Activated CD4-positive, alpha-beta T cell treated with anti-CD3 and anti-CD28 coated beads for 36 hours (primary cell): ENCODE measurements at regions of chr18 and their contacts with region 1.

Region 1: GRCh38 chr18:45690975-45691815 is 32.8 kb upstream of the SLC14A1 start:
- DNase-seq: peak; percentile 87
- ATAC-seq: peak; percentile 17
- H3K4me3 Mint-ChIP-seq: no peak overlapping the region
- H3K27ac Mint-ChIP-seq: no peak overlapping the region
- H3K4me1 Mint-ChIP-seq: peaks cover 42% of the 10 kb centered on the region
- H3K27me3 Mint-ChIP-seq: peaks cover 7% of the 10 kb centered on the region

Region 2: GRCh38 chr18:45670281-45670962 is 20.8 kb before region 1 on chr18:
- CTCF ChIA-PET with region 1: interaction called, 71 read pairs
- POLR2A ChIA-PET with region 1: interaction called, 5 read pairs
- intact Hi-C with region 1: loop called (anchors 1 kb)
- DNase-seq: peak; percentile 79
- ATAC-seq: peak; percentile 73
- H3K4me3 Mint-ChIP-seq: peak overlapping the region; percentile 56
- H3K27ac Mint-ChIP-seq: peak overlapping the region; percentile 85
- H3K4me1 Mint-ChIP-seq: peaks cover 63% of the 10 kb centered on the region
- H3K27me3 Mint-ChIP-seq: no peaks in the 10 kb centered on the region

Region 3: DNA sequence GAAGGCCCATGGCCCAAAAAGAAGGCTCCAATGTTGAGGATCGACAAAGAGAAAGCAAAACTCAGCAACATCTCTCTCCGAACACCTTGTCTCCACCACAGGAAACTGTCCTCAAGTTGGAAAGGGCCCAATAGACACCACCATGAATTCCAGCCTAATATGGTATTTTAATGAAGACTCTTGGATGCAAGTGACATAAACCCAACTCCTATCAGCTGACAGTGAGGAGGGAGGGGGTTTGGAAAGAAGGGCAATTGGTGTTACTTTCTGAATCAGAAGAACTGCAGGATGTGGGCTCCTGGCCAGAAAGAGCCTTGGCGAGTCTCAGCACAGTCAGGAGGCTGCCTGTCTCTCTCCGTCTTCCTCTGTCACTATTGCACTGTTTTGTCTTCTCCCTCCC is 93.9 kb after region 1 on chr18:
- CTCF ChIA-PET with region 1: no interaction called
- POLR2A ChIA-PET with region 1: no interaction called
- intact Hi-C with region 1: no loop called
- DNase-seq: peak; percentile 17
- ATAC-seq: peak; percentile 33
- H3K4me3 Mint-ChIP-seq: no peak overlapping the region
- H3K27ac Mint-ChIP-seq: no peak overlapping the region
- H3K4me1 Mint-ChIP-seq: no peaks in the 10 kb centered on the region
- H3K27me3 Mint-ChIP-seq: peaks cover 5% of the 10 kb centered on the region

Region 4: GRCh38 chr18:45839414-45840395 is 148.5 kb after region 1 on chr18:
- CTCF ChIA-PET with region 1: no interaction called
- POLR2A ChIA-PET with region 1: no interaction called
- intact Hi-C with region 1: loop called in 1 of 2 experiments (anchors 2 kb)
- DNase-seq: peak; percentile 63
- ATAC-seq: peak; percentile 73
- H3K4me3 Mint-ChIP-seq: no peak overlapping the region
- H3K27ac Mint-ChIP-seq: no peak overlapping the region
- H3K4me1 Mint-ChIP-seq: peaks cover 10% of the 10 kb centered on the region
- H3K27me3 Mint-ChIP-seq: peaks cover 38% of the 10 kb centered on the region

Region 5: GRCh38 chr18:45879681-45880655 is 188.8 kb after region 1 on chr18:
- CTCF ChIA-PET with region 1: interaction called, 33 read pairs
- POLR2A ChIA-PET with region 1: no interaction called
- intact Hi-C with region 1: loop called (anchors 1 kb)
- DNase-seq: peak; percentile 85
- ATAC-seq: peak; percentile 87
- H3K4me3 Mint-ChIP-seq: no peak overlapping the region
- H3K27ac Mint-ChIP-seq: no peak overlapping the region
- H3K4me1 Mint-ChIP-seq: peaks cover 10% of the 10 kb centered on the region
- H3K27me3 Mint-ChIP-seq: no peaks in the 10 kb centered on the region

Region 6: DNA sequence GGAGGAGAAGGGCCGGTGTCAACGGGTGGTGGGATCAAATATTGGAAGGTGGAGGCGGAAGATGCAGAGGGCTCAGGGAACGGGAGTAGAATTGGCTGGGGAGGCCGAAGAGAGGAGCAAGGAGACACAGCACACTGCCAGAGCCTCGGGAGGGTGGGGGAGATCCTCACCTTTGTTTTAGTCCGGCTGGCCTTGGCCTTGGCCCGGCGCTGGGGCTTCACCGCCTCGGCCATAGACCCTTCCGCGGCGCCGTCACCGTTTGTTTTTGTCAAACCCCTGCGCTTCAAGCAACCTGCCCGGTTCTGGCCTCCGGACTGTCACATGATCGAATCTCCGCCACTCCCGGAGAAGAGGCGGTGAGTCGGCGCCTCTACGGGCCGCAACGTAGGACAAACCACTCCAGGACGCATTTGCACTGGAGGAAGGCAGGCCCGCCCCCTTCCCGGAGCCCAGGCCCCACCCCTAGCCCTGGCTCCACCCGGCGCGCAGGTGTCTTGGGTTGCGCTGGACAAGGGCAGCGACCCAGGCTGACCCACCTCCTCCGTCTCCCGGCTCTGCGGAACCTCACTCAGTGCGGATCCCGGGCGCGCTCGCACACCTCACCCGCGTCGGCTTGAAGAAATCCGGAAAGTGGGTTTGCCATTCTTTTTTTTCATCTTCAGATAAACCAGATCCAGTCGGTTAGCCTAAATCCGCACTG is 276.0 kb after region 1 on chr18 and contains the start of gene EPG5:
- CTCF ChIA-PET with region 1: no interaction called
- POLR2A ChIA-PET with region 1: no interaction called
- intact Hi-C with region 1: loop called in 1 of 2 experiments (anchors 2 kb)
- DNase-seq: peak; percentile 97
- ATAC-seq: peak; percentile 96
- H3K4me3 Mint-ChIP-seq: peak within 1 kb of the TSS; percentile 94
- H3K27ac Mint-ChIP-seq: peak within 1 kb of the TSS; percentile 94
- H3K4me1 Mint-ChIP-seq: peaks cover 35% of the 10 kb centered on the region
- H3K27me3 Mint-ChIP-seq: no peaks in the 10 kb centered on the region
- total RNA-seq, gene EPG5: 13.6 to 14.5 TPM